A673 (cell line): ENCODE measurements at regions of chr11 and their contacts with region 1.

Region 1: GRCh38 chr11:34926101-34926830 is 9.8 kb downstream of the PDHX start:
- DNase-seq: peak; percentile 89
- H3K4me3 ChIP-seq: no peak overlapping the region
- H3K27ac ChIP-seq: no peak overlapping the region
- H3K4me1 ChIP-seq: peaks cover 25% of the 10 kb centered on the region
- H3K27me3 ChIP-seq: no peaks in the 10 kb centered on the region
- CTCF ChIP-seq: peak; percentile 98

Region 2: DNA sequence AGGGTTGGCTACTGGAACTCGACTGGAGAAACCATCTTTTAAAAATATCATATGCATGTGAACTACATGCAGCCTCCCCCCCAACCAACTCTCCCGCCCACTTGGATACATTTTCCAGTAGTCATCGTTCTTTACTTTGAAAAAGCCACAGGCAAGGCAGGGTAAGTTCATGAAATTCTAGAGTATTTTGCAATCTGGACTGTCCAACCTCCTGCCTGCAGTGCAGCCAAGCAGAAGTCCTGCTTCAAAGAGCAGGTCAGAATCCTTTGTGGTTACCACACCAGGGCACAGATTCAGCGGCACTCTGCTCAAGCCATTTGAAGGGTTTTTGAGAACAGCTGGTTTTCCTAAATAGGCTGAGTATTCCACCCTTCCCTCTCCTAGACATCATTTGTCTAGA is 424.8 kb before region 1 on chr11:
- CTCF ChIA-PET with region 1: no interaction called
- POLR2A ChIA-PET with region 1: no interaction called
- intact Hi-C with region 1: no loop called
- DNase-seq: no peak
- H3K4me3 ChIP-seq: no peak overlapping the region
- H3K27ac ChIP-seq: no peak overlapping the region
- H3K4me1 ChIP-seq: no peaks in the 10 kb centered on the region
- H3K27me3 ChIP-seq: no peaks in the 10 kb centered on the region
- CTCF ChIP-seq: no peak

Region 3: DNA sequence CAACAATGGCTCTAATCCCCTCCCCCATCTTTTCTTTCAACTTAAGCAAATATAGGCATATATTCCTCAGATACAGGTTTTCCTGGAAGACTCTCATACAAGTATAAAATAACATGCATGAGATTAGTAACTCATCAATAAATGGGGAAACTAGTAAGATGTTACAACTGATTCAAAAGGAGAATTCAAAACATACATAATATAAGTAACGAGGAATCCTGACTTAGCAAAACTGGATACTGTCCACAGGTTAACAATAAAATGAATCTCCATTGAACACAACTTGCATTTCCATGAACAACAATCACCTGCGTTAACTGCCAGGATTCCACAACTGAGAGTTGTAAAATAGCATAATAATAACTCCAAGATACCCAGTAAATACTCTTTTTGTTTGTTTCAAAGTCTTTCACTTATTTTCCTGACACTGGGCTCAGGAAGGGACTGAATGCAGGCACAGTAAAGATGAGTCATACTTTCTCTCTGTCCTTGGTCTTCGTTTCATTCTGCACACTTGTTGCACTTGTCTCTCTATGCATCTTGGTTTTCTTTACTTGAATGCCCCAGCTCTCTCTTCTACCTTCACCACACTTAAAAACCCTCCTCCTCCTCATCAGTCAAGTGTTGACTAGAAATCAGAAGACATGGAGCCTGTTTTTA is 18.2 kb before region 1 on chr11:
- CTCF ChIA-PET with region 1: no interaction called
- POLR2A ChIA-PET with region 1: no interaction called
- intact Hi-C with region 1: no loop called
- DNase-seq: no peak
- H3K4me3 ChIP-seq: no peak overlapping the region
- H3K27ac ChIP-seq: no peak overlapping the region
- H3K4me1 ChIP-seq: no peaks in the 10 kb centered on the region
- H3K27me3 ChIP-seq: no peaks in the 10 kb centered on the region
- CTCF ChIP-seq: no peak

Region 4: DNA sequence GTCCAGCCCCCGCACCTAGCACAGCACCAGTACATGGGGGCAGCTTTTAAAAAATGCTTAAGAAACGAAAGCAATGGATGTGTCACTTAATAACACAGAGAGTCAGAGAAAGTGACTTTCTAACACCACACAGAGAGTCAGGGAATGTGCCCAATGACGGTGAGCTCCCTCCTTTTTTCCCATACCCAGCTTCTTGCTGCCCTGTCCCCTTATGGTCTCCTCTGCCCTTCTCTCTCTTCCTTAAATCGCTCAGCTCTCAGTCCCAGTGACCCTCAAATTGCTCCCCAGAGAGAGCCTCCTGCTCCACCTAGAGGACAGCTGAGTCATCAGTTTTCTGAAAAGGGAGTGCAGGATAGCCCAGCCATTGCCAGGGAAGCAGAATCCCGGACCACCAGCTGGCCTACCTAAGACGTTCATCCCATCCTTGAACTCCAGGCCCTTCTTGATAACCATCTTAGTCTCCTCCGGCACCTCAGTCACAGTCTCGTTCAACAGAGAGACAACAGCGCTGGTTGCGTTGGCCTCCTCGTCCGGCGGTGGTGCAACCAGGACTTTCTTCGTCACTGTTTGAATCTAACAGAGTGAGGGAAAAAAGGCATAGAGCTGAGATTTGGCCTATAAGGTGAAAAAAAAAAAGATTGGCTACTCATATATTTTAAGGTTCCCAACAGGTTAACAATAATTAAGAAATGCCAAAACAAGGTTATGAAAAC is 379.6 kb after region 1 on chr11:
- CTCF ChIA-PET with region 1: no interaction called
- POLR2A ChIA-PET with region 1: no interaction called
- intact Hi-C with region 1: loop called (anchors 5 kb)
- DNase-seq: peak; percentile 77
- H3K4me3 ChIP-seq: no peak overlapping the region
- H3K27ac ChIP-seq: no peak overlapping the region
- H3K4me1 ChIP-seq: no peaks in the 10 kb centered on the region
- H3K27me3 ChIP-seq: peaks cover 6% of the 10 kb centered on the region
- CTCF ChIP-seq: peak; percentile 72

Region 5: GRCh38 chr11:36265793-36266628 is 1339.7 kb after region 1 on chr11:
- CTCF ChIA-PET with region 1: no interaction called
- POLR2A ChIA-PET with region 1: no interaction called
- intact Hi-C with region 1: loop called (anchors 10 kb)
- DNase-seq: peak; percentile 87
- H3K4me3 ChIP-seq: no peak overlapping the region
- H3K27ac ChIP-seq: no peak overlapping the region
- H3K4me1 ChIP-seq: no peaks in the 10 kb centered on the region
- H3K27me3 ChIP-seq: peaks cover 2% of the 10 kb centered on the region
- CTCF ChIP-seq: peak; percentile 100